ENCODE measurements at regions of chr15 and their contacts with region 1.

Region 1: GRCh38 chr15:49145651-49146609 is 9.5 kb downstream of the COPS2 start:
- DNase-seq: no peak
- ATAC-seq: peak; percentile 75
- H3K4me3 ChIP-seq: no peak overlapping the region
- H3K27ac ChIP-seq: no peak overlapping the region
- H3K4me1 ChIP-seq: no peaks in the 10 kb centered on the region
- H3K27me3 ChIP-seq: no peaks in the 10 kb centered on the region
- CTCF ChIP-seq: peak; percentile 59 to 64 (median 63); a peak in 5 of 6 replicates
- EP300 ChIP-seq: no peak
- POLR2A ChIP-seq: no peak
- RAD21 ChIP-seq: peak; percentile 57

Region 2: GRCh38 chr15:48868536-48868935 is 277.4 kb before region 1 on chr15:
- CTCF ChIA-PET with region 1: interaction called, 16 read pairs
- POLR2A ChIA-PET with region 1: no interaction called
- RAD21 ChIA-PET with region 1: interaction called, 4 read pairs
- SMC1A ChIA-PET with region 1: interaction called, 47 read pairs
- in situ Hi-C with region 1: loop called (anchors 5 kb)
- intact Hi-C with region 1: no loop called
- DNase-seq: no peak
- ATAC-seq: no peak
- H3K4me3 ChIP-seq: no peak overlapping the region
- H3K27ac ChIP-seq: no peak overlapping the region
- H3K4me1 ChIP-seq: no peaks in the 10 kb centered on the region
- H3K27me3 ChIP-seq: no peaks in the 10 kb centered on the region; a peak in 1 of 4 replicates
- CTCF ChIP-seq: no peak
- EP300 ChIP-seq: no peak
- POLR2A ChIP-seq: no peak
- RAD21 ChIP-seq: no peak

Region 3: GRCh38 chr15:48877630-48878595 is 268.0 kb before region 1 on chr15 and contains the start of gene EID1:
- CTCF ChIA-PET with region 1: interaction called, 4 read pairs
- POLR2A ChIA-PET with region 1: interaction called, 3 read pairs
- RAD21 ChIA-PET with region 1: interaction called, 4 read pairs
- SMC1A ChIA-PET with region 1: interaction called, 14 read pairs
- in situ Hi-C with region 1: no loop called
- intact Hi-C with region 1: no loop called
- DNase-seq: peak; percentile 87
- ATAC-seq: peak; percentile 94
- H3K4me3 ChIP-seq: peak within 1 kb of the TSS; percentile 67
- H3K27ac ChIP-seq: peak within 1 kb of the TSS; percentile 85
- H3K4me1 ChIP-seq: peaks cover 4% of the 10 kb centered on the region
- H3K27me3 ChIP-seq: no peaks in the 10 kb centered on the region
- CTCF ChIP-seq: no peak
- EP300 ChIP-seq: peak in 1 of 2 experiments; percentile 40; a peak in 1 of 4 replicates
- POLR2A ChIP-seq: peak; percentile 98
- RAD21 ChIP-seq: no peak
- polyA plus RNA-seq, gene EID1: 45.6 to 79.5 TPM

Region 4: DNA sequence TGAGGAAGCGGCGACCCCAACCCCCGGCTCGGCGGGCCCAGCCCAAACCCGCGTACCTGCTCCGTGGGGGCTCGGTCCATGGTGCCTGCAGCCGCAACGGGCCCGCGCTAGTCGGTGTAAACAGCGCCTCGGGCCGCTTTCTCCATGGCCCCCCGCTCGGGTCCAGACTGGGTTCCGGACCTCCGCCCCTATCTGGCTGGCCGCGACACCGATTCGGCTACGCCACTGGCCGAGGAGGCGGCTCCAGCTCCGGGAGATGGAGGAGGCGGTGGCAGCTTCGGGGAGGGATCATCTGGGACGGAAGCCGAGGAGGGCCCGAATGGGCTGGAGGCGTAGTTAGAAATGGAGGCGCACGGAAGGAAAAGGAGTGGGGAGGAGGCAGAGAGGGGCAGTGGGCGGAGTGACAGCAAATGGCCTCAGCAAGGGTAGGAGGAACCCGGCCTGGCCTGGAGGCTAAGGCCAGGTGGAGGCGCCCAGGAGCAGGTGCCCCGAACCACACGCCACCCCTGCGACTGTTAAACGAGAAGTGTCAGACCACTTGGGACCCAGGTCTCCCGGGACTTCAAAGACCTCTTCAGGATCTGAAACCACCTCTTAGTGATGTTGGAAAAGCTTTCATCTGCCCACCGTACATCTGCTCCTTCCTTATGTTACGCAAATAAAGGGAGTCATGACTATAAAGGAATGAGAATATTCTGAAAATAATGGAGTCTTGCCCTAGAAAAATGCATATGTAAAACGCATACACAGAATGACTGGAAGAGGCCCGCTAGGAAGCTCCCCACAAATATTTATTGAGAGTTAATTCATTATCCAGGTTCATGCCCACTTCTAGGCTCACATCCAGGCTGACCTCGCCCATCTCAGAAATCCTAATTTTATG is 99.5 kb before region 1 on chr15 and contains the start of gene SECISBP2L:
- CTCF ChIA-PET with region 1: interaction called, 18 read pairs
- POLR2A ChIA-PET with region 1: interaction called, 5 read pairs
- RAD21 ChIA-PET with region 1: interaction called, 4 read pairs
- SMC1A ChIA-PET with region 1: interaction called, 7 read pairs
- in situ Hi-C with region 1: no loop called
- intact Hi-C with region 1: loop called (anchors 5 kb)
- DNase-seq: peak; percentile 89
- ATAC-seq: peak; percentile 96
- H3K4me3 ChIP-seq: peak within 1 kb of the TSS; percentile 91
- H3K27ac ChIP-seq: peak within 1 kb of the TSS; percentile 91
- H3K4me1 ChIP-seq: peaks cover 7% of the 10 kb centered on the region; the same call in 1 of the 2 replicates
- H3K27me3 ChIP-seq: no peaks in the 10 kb centered on the region
- CTCF ChIP-seq: peak; percentile 55 to 63 (median 55)
- EP300 ChIP-seq: peak in 1 of 2 experiments; percentile 45; a peak in 1 of 4 replicates
- POLR2A ChIP-seq: peak; percentile 94
- RAD21 ChIP-seq: peak; percentile 19; the same call in 1 of the 2 replicates
- polyA plus RNA-seq, gene SECISBP2L: 1.4 to 2.8 TPM

Region 5: GRCh38 chr15:49122541-49123062 is 23.3 kb before region 1 on chr15:
- CTCF ChIA-PET with region 1: interaction called, 11 read pairs
- POLR2A ChIA-PET with region 1: no interaction called
- RAD21 ChIA-PET with region 1: interaction called, 4 read pairs
- SMC1A ChIA-PET with region 1: interaction called, 3 read pairs
- in situ Hi-C with region 1: no loop called
- intact Hi-C with region 1: no loop called
- DNase-seq: no peak
- ATAC-seq: no peak
- H3K4me3 ChIP-seq: no peak overlapping the region
- H3K27ac ChIP-seq: no peak overlapping the region
- H3K4me1 ChIP-seq: no peaks in the 10 kb centered on the region
- H3K27me3 ChIP-seq: no peaks in the 10 kb centered on the region
- CTCF ChIP-seq: no peak
- EP300 ChIP-seq: no peak
- POLR2A ChIP-seq: no peak
- RAD21 ChIP-seq: no peak

Region 6: DNA sequence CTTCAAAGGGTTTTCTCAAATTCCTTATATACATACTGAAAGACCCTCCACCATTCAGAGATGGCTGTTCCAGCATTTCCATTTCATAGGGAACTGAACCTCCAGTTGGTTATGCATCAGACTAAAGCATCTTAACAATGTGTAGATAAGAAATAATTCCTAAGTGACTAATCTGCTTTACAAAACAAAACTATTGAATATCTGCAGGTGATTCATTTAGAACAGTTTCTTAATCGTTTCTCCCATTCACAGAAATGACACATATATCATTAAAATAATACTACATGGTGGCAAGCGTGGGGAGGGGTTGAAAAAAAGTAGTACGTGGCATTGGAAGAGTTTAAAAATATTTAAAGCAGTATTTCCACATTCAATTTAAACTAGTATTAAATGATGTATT is 10.0 kb before region 1 on chr15:
- CTCF ChIA-PET with region 1: interaction called, 21 read pairs
- POLR2A ChIA-PET with region 1: interaction called, 3 read pairs
- RAD21 ChIA-PET with region 1: interaction called, 6 read pairs
- SMC1A ChIA-PET with region 1: interaction called, 9 read pairs
- in situ Hi-C with region 1: no loop called
- intact Hi-C with region 1: no loop called
- DNase-seq: no peak
- ATAC-seq: no peak
- H3K4me3 ChIP-seq: no peak overlapping the region
- H3K27ac ChIP-seq: no peak overlapping the region
- H3K4me1 ChIP-seq: peaks cover 5% of the 10 kb centered on the region; the same call in 1 of the 2 replicates
- H3K27me3 ChIP-seq: no peaks in the 10 kb centered on the region
- CTCF ChIP-seq: no peak
- EP300 ChIP-seq: no peak
- POLR2A ChIP-seq: no peak
- RAD21 ChIP-seq: no peak

Region 7: DNA sequence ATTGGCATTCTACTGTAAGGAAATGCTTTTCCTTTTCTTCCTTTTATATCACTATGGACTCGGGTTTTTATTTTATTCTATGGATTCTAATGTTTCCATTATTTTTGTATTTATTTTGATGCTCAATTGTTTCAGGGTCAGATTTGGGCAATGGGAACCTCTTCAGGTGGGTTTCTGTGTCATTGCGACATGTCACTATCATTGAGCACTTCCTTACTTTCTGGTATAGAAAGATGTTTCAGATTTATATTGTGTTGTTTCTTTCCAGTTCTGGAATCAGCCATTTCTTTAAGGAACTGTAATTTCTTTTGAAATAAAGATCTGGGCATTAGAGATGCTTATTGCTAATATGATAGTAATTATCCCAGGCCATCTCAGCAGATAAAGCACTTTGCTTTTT is 46.0 kb after region 1 on chr15:
- CTCF ChIA-PET with region 1: no interaction called
- POLR2A ChIA-PET with region 1: no interaction called
- RAD21 ChIA-PET with region 1: no interaction called
- SMC1A ChIA-PET with region 1: no interaction called
- in situ Hi-C with region 1: no loop called
- intact Hi-C with region 1: no loop called
- DNase-seq: no peak
- ATAC-seq: no peak
- H3K4me3 ChIP-seq: no peak overlapping the region
- H3K27ac ChIP-seq: no peak overlapping the region
- H3K4me1 ChIP-seq: no peaks in the 10 kb centered on the region
- H3K27me3 ChIP-seq: no peaks in the 10 kb centered on the region
- CTCF ChIP-seq: no peak
- EP300 ChIP-seq: no peak
- POLR2A ChIP-seq: no peak
- RAD21 ChIP-seq: no peak

Measured in GM12878 (cell line).